HepG2 (cell line): ENCODE measurements at regions of chr19 and their contacts with region 1.

Region 1: GRCh38 chr19:17075035-17075863 is at the starts of genes HAUS8 and MYO9B:
- DNase-seq: peak; percentile 96
- ATAC-seq: peak; percentile 77
- H3K4me3 ChIP-seq: peak within 1 kb of the TSS; percentile 79 to 98 (median 90)
- H3K27ac ChIP-seq: peak within 1 kb of the TSS; percentile 75
- H3K4me1 ChIP-seq: peaks cover 66% of the 10 kb centered on the region
- H3K27me3 ChIP-seq: no peaks in the 10 kb centered on the region; a peak in 1 of 5 replicates
- CTCF ChIP-seq: no peak; the same call in 1 of the 2 replicates
- EP300 ChIP-seq: no peak
- POLR2A ChIP-seq: peak; percentile 69 to 77
- RAD21 ChIP-seq: peak; percentile 21; the same call in 1 of the 2 replicates
- total RNA-seq, gene HAUS8: 17.5 and 19.1 TPM in 2 replicates
- total RNA-seq, gene MYO9B: 14.1 and 18.0 TPM in 2 replicates

Region 2: GRCh38 chr19:17086120-17086519 is 10.9 kb after region 1 on chr19:
- CTCF ChIA-PET with region 1: no interaction called
- POLR2A ChIA-PET with region 1: no interaction called
- in situ Hi-C with region 1: no loop called
- intact Hi-C with region 1: no loop called
- DNase-seq: no peak
- ATAC-seq: no peak
- H3K4me3 ChIP-seq: no peak overlapping the region
- H3K27ac ChIP-seq: no peak overlapping the region
- H3K4me1 ChIP-seq: peaks cover 6% of the 10 kb centered on the region; the same call in 1 of the 2 replicates
- H3K27me3 ChIP-seq: no peaks in the 10 kb centered on the region
- CTCF ChIP-seq: no peak
- EP300 ChIP-seq: no peak
- POLR2A ChIP-seq: no peak
- RAD21 ChIP-seq: no peak

Region 3: GRCh38 chr19:17097593-17098126 is 22.4 kb after region 1 on chr19:
- CTCF ChIA-PET with region 1: interaction called, 5 read pairs
- POLR2A ChIA-PET with region 1: no interaction called
- in situ Hi-C with region 1: no loop called
- intact Hi-C with region 1: loop called (anchors 2 kb)
- DNase-seq: peak; percentile 86
- ATAC-seq: peak; percentile 87
- H3K4me3 ChIP-seq: peak overlapping the region in 2 of 3 experiments; percentile 7 to 25; a peak in 3 of 6 replicates
- H3K27ac ChIP-seq: peak overlapping the region; percentile 85
- H3K4me1 ChIP-seq: peaks cover 42% of the 10 kb centered on the region
- H3K27me3 ChIP-seq: no peaks in the 10 kb centered on the region
- CTCF ChIP-seq: no peak
- EP300 ChIP-seq: peak; percentile 42 to 85; a peak in 3 of 4 replicates
- POLR2A ChIP-seq: no peak
- RAD21 ChIP-seq: 0 out of 2 replicates have a peak, but pooled peaks have one; percentile 9

Region 4: DNA sequence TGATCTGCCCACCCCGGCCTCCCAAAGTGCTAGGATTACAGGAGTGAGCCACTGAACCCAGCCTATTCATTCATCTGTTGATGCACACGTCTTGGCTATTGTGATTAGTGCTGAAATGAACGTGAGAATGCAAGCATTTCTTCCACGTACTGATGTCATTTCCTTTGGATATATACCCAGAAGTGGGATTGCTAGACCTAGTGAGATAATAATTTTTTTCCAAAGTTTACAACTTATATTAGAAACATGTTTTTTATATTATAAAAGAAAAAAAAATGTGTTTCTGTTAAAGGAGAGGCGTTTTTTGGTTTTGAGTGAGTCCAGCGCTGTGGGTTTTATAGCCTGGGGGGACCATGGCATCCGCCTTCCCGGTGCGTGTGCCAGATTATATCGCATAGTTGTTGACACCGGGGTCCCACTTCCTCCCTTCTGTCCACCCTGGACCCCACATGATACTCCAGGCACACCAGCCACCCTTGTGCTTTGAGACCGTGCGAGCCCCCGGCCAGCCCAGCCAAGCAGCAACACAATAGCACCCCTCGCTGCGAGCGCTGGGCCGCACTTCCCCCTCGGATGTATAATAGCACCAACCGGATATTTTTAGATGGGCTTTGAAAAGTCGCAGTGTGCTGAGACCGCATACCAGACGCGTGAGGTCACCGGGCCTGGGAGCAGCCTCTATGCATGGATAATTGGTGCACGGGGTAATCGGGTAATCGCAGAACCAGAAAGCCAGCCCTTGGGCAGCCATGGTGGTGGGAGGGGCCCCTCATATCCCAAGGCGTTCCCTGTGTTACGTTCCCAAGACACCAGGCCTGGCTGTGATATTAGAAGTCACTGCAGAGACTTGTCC is 60.0 kb after region 1 on chr19:
- CTCF ChIA-PET with region 1: interaction called, 3 read pairs
- POLR2A ChIA-PET with region 1: interaction called, 3 read pairs
- in situ Hi-C with region 1: no loop called
- intact Hi-C with region 1: loop called (anchors 5 kb)
- DNase-seq: peak; percentile 87
- ATAC-seq: peak; percentile 72
- H3K4me3 ChIP-seq: peak overlapping the region in 1 of 3 experiments; percentile 49; a peak in 2 of 6 replicates
- H3K27ac ChIP-seq: peak overlapping the region; percentile 68
- H3K4me1 ChIP-seq: peaks cover 83% of the 10 kb centered on the region
- H3K27me3 ChIP-seq: no peaks in the 10 kb centered on the region
- CTCF ChIP-seq: peak; percentile 44
- EP300 ChIP-seq: no peak
- POLR2A ChIP-seq: no peak
- RAD21 ChIP-seq: no peak